ENCODE measurements at regions of chr16 and their contacts with region 1.

Region 1: DNA sequence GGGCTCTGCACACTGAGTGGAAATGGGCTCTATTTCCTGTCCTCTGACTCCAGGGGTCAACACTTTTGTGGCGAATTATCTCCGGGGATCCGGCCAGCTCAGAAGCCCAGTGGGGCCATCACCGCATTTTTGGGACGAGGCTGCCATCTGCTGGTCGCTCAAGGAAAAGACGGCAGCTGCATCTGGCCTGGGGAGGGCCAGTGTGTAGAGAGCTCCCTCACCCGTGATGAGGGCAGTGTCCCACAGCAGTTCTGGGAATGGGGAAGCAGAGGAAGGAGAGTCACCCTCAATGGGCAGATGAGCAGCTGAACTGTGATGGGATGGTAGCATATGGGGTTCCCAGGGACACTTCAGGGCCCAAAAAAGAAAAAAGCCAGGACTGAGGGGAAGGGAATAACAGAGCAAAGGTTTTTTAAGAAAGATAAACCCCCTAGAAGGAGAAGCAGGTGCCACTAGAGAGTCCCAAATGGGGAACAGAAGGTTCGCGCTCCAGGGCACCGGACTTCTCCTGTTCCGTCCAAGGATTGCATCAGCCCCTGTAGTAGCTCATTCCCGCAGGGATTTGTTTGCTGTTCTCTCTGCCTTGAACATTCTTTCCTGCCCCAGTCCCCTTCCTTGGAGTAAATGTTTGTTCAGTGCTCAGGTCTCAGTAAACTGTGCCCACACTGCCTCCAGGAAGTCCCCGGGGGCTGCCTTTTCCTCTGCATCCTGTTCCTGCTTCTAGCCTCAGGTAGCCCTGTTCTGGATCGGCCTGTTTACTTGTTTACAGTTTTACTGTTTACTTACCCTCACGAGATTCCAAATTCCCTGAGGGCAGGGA is 9.3 kb upstream of the ABCC12 start:
- DNase-seq: peak; percentile 83 to 92
- ATAC-seq: peak; percentile 89
- H3K4me3 ChIP-seq: no peak overlapping the region
- H3K27ac ChIP-seq: no peak overlapping the region
- H3K4me1 ChIP-seq: no peaks in the 10 kb centered on the region
- H3K27me3 ChIP-seq: no peaks in the 10 kb centered on the region

Region 2: DNA sequence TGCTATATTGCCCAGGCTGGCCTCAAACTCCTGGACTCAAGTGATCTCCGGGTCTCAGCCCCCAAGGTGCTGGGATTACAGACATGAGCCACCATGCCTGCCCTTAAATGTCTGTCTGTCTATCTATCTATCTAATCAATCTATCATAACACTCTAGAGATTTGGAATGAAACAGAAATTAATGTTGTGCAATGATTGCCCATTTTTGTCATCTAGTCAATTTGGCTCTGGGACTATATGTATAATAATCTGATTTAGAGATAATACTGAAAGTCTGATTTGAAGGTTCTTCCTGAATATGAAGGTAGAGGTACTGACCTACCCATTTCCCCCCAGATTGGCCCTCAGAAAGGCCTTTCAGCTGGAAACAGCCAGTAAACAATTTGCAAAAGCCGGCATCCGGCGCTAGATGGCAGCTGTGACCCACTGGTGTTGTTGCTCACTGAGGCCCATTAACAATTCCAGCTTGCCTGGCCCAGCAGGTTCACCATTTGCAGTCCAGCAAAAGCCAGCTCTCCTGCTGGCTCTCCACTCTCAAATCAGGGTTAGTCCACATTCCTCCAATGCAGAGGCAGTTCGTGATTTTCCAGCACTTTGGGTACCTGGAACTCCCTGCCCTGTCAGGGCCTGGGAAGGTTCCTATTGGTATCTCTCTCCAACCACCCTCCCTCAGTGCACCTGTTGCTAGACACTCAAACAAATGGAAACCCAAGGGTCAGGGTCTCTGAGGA is 1311.2 kb before region 1 on chr16:
- intact Hi-C with region 1: loop called (anchors 5 to 10 kb)
- DNase-seq: peak; percentile 81 to 89
- ATAC-seq: peak; percentile 75
- H3K4me3 ChIP-seq: no peak overlapping the region
- H3K27ac ChIP-seq: no peak overlapping the region
- H3K4me1 ChIP-seq: no peaks in the 10 kb centered on the region
- H3K27me3 ChIP-seq: no peaks in the 10 kb centered on the region

Region 3: GRCh38 chr16:46947900-46948547 is 1217.1 kb before region 1 on chr16:
- intact Hi-C with region 1: loop called (anchors 5 to 10 kb)
- DNase-seq: no peak
- ATAC-seq: peak; percentile 62
- H3K4me3 ChIP-seq: no peak overlapping the region
- H3K27ac ChIP-seq: no peak overlapping the region
- H3K4me1 ChIP-seq: no peaks in the 10 kb centered on the region
- H3K27me3 ChIP-seq: no peaks in the 10 kb centered on the region

Region 4: DNA sequence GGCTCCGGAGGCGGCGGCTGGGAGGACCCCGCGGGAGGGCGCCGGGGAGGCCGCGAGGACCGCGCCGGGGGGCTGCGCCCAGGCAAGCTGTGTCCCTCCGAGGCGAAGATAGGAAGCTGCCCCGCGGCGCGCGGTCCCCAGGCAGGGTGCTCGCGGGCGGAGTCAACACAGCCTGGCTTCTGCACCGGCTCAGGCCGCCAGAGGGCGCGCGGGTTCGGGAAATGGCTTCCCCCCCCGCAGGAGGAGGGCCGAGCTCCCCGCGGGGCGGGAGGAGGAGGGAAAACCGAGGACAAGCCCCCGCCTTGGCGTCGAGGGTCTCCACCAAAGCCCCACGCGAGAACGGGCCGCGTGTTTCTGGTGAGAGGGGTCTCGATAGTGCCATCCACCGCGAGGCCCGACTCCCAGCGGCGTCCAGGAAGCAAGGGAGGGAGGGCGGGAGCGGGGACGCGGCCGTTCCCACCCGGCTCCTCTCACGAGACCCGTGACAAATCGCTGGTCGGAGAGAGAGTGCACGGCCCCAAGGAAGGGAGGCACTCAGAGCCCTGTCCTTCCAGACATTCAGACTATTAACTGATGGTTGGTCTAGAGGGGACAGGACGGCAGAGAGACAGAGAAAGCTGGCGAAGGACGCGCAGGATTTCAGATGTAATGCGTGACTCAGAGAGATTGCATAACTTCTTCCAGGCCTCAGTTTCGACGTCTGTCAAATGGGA is 1127.2 kb before region 1 on chr16:
- intact Hi-C with region 1: loop called (anchors 5 to 10 kb)
- DNase-seq: peak; percentile 93 to 98
- ATAC-seq: peak; percentile 96
- H3K4me3 ChIP-seq: peak overlapping the region; percentile 60 to 86
- H3K27ac ChIP-seq: no peak overlapping the region
- H3K4me1 ChIP-seq: no peaks in the 10 kb centered on the region
- H3K27me3 ChIP-seq: no peaks in the 10 kb centered on the region